Panc1 (cell line): ENCODE measurements at regions of chr6 and their contacts with region 1.

Region 1: GRCh38 chr6:32868257-32868788 is 14.3 kb downstream of the PSMB9 start:
- DNase-seq: peak; percentile 57
- ATAC-seq: peak; percentile 94
- H3K4me3 ChIP-seq: no peak overlapping the region
- H3K27ac ChIP-seq: no peak overlapping the region
- H3K4me1 ChIP-seq: 0 out of 2 replicates have a peak, but pooled peaks cover 3% of the 10 kb centered on the region
- H3K27me3 ChIP-seq: peaks cover 10% of the 10 kb centered on the region; the same call in 1 of the 2 replicates
- CTCF ChIP-seq: peak; percentile 81; the same call in 1 of the 2 replicates

Region 2: GRCh38 chr6:32413427-32414047 is 454.8 kb before region 1 on chr6:
- CTCF ChIA-PET with region 1: interaction called, 5 read pairs
- POLR2A ChIA-PET with region 1: no interaction called
- in situ Hi-C with region 1: no loop called
- intact Hi-C with region 1: loop called (anchors 10 kb)
- DNase-seq: peak; percentile 69
- ATAC-seq: peak; percentile 82
- H3K4me3 ChIP-seq: no peak overlapping the region
- H3K27ac ChIP-seq: no peak overlapping the region
- H3K4me1 ChIP-seq: peaks cover 3% of the 10 kb centered on the region; the same call in 1 of the 2 replicates
- H3K27me3 ChIP-seq: peaks cover 35% of the 10 kb centered on the region
- CTCF ChIP-seq: peak; percentile 96

Region 3: GRCh38 chr6:32501016-32501415 is 367.3 kb before region 1 on chr6:
- CTCF ChIA-PET with region 1: no interaction called
- POLR2A ChIA-PET with region 1: no interaction called
- in situ Hi-C with region 1: no loop called
- intact Hi-C with region 1: no loop called
- DNase-seq: no peak
- ATAC-seq: no peak
- H3K4me3 ChIP-seq: no peak overlapping the region
- H3K27ac ChIP-seq: no peak overlapping the region
- H3K4me1 ChIP-seq: no peaks in the 10 kb centered on the region
- H3K27me3 ChIP-seq: no peaks in the 10 kb centered on the region
- CTCF ChIP-seq: no peak

Region 4: GRCh38 chr6:32853541-32854375 is 14.6 kb before region 1 on chr6 and contains the starts of genes PSMB9 and TAP1:
- CTCF ChIA-PET with region 1: interaction called, 12 read pairs
- POLR2A ChIA-PET with region 1: no interaction called
- in situ Hi-C with region 1: no loop called
- intact Hi-C with region 1: no loop called
- DNase-seq: peak; percentile 90
- ATAC-seq: peak; percentile 96
- H3K4me3 ChIP-seq: peak within 1 kb of the TSS; percentile 77 to 79
- H3K27ac ChIP-seq: peak within 1 kb of the TSS; percentile 92
- H3K4me1 ChIP-seq: peaks cover 9% of the 10 kb centered on the region
- H3K27me3 ChIP-seq: no peaks in the 10 kb centered on the region
- CTCF ChIP-seq: peak; percentile 94
- total RNA-seq, gene PSMB9: 41.5 TPM
- total RNA-seq, gene TAP1: 74.7 TPM

Region 5: DNA sequence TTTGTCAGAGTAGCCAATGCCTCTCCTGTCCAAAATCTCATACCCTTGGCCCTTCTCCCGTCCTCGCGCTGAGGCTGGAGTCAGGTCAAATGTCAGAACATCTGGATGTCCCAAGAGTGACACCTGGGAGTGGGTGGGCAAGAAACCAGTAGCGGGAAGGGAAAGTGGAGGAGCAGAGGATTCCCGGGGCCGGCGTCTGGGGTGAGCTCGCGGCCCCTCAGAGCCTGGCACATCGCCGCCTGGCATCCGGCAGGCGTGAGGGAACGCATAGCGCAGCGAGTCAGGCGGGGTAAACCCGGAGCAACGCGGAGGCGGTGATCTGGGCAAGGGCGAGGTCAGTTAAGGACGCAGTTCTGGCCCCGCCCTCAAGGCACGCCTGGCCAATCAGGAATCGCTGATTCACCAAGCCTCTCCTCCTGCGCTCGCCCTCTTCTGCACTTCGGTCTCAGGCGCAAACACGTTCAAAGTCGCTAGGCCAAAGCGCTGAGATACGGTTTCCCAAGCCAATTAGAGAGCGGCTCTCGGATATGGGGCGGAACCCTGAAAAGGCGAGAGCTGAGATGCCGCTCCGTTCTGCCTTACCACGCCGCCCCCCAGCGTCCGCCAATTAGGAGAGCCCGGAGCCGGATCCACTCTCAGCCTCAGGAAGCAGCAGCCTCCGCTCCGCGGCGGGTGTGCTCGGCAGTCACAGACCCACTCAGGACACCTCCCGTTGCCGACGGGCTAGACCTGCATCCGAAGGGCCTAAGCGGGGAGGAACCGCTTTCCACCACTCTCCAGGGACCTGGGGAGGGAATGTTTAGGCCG is 380.8 kb after region 1 on chr6:
- CTCF ChIA-PET with region 1: interaction called, 10 read pairs
- POLR2A ChIA-PET with region 1: no interaction called
- in situ Hi-C with region 1: no loop called
- intact Hi-C with region 1: no loop called
- DNase-seq: peak; percentile 97
- ATAC-seq: peak; percentile 93
- H3K4me3 ChIP-seq: peak overlapping the region; percentile 67 to 82
- H3K27ac ChIP-seq: peak overlapping the region; percentile 98
- H3K4me1 ChIP-seq: peaks cover 14% of the 10 kb centered on the region
- H3K27me3 ChIP-seq: no peaks in the 10 kb centered on the region
- CTCF ChIP-seq: no peak